Activated CD8-positive, alpha-beta T cell treated with anti-CD3 and anti-CD28 coated beads for 36 hours (primary cell): ENCODE measurements at regions of chr16 and their contacts with region 1.

Region 1: GRCh38 chr16:31202414-31203375 is at the start of gene PYCARD:
- DNase-seq: peak; percentile 45
- ATAC-seq: peak; percentile 24
- H3K4me3 Mint-ChIP-seq: peak within 1 kb of the TSS; percentile 75
- H3K27ac Mint-ChIP-seq: peak within 1 kb of the TSS; percentile 47
- H3K4me1 Mint-ChIP-seq: peaks cover 40% of the 10 kb centered on the region
- H3K27me3 Mint-ChIP-seq: no peaks in the 10 kb centered on the region
- CTCF ChIP-seq: no peak
- total RNA-seq, gene PYCARD: 5.9 to 6.1 TPM

Region 2: DNA sequence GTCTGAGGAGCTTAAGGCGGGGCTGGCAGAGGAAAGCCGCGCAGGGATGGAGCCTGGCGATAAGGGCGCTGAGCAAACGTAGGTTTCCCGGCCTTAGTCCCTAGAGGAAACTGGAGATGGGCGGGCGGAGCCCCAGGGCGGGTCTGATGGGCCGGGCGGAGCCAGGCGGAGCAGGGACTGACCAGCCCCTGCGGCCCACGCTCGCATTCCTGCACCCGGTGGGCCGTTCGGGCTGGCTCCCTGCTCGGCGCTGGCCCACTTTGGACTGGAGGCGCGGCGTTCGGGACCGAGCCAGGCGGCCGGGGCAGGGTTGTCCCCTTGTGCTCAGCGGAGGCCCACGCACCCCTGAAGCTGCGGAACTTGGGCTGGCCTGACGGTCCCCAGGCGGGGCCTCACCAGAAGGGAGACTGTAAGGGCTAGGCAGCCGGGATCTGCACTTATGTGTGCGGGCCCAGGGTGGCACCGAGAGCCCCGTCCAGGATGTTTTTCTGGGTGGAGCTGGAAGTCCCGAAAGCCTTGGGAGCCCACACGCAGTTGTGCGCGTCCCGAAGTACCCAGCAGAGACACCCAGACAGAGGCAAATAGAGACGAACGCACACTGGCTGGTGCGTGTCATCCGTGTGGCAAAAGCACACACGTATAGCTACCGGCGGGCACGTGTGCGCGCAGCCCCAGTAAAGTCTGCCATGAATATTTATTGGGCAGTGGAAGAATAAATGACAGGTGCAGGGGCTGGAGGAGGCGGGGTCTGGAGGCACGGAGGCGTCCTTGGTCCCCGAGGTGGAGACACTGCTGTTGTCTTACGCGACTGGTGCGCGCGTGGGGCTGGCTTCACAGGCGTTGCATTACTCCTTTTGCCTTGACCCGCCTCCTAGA is 12.8 kb after region 1 on chr16:
- CTCF ChIA-PET with region 1: interaction called, 9 read pairs
- POLR2A ChIA-PET with region 1: interaction called, 48 read pairs
- intact Hi-C with region 1: no loop called
- DNase-seq: peak; percentile 52
- ATAC-seq: peak; percentile 66
- H3K4me3 Mint-ChIP-seq: peak overlapping the region; percentile 42
- H3K27ac Mint-ChIP-seq: no peak overlapping the region
- H3K4me1 Mint-ChIP-seq: peaks cover 22% of the 10 kb centered on the region
- H3K27me3 Mint-ChIP-seq: peaks cover 41% of the 10 kb centered on the region
- CTCF ChIP-seq: no peak

Region 3: GRCh38 chr16:31229501-31229900 is 26.8 kb after region 1 on chr16:
- CTCF ChIA-PET with region 1: no interaction called
- POLR2A ChIA-PET with region 1: no interaction called
- intact Hi-C with region 1: no loop called
- DNase-seq: no peak
- ATAC-seq: no peak
- H3K4me3 Mint-ChIP-seq: no peak overlapping the region
- H3K27ac Mint-ChIP-seq: no peak overlapping the region
- H3K4me1 Mint-ChIP-seq: no peaks in the 10 kb centered on the region
- H3K27me3 Mint-ChIP-seq: no peaks in the 10 kb centered on the region
- CTCF ChIP-seq: no peak

Region 4: GRCh38 chr16:31440516-31441184 is 238.0 kb after region 1 on chr16:
- CTCF ChIA-PET with region 1: interaction called, 6 read pairs
- POLR2A ChIA-PET with region 1: interaction called, 8 read pairs
- intact Hi-C with region 1: loop called (anchors 10 kb)
- DNase-seq: no peak
- ATAC-seq: no peak
- H3K4me3 Mint-ChIP-seq: no peak overlapping the region
- H3K27ac Mint-ChIP-seq: no peak overlapping the region
- H3K4me1 Mint-ChIP-seq: peaks cover 19% of the 10 kb centered on the region
- H3K27me3 Mint-ChIP-seq: peaks cover 6% of the 10 kb centered on the region
- CTCF ChIP-seq: no peak

Region 5: DNA sequence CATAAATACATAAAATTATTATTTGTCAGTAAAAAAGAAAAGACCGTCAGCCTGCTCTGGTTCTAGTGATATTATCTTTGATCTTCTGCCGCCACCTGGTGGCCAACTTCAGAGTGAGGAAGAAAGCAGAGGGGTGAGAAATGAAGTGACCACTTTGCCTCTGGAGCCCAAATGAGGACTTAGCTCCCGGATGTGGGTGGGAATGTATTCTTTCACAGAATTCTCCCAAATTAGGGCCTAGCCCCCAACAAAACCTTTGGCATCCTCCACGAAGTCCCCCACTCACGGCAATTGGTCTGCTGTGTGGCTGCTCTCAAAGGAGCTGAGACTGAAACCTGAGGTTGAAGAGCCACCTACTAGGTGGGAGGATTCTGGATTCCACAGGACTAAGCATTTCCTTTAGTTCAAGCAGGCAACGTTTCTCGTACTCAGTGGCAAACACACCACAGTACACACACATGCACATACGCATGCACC is 666.0 kb after region 1 on chr16:
- CTCF ChIA-PET with region 1: interaction called, 10 read pairs
- POLR2A ChIA-PET with region 1: no interaction called
- intact Hi-C with region 1: no loop called
- DNase-seq: peak; percentile 91
- ATAC-seq: peak; percentile 48
- H3K4me3 Mint-ChIP-seq: peak overlapping the region; percentile 66
- H3K27ac Mint-ChIP-seq: peak overlapping the region; percentile 97
- H3K4me1 Mint-ChIP-seq: peaks cover 51% of the 10 kb centered on the region
- H3K27me3 Mint-ChIP-seq: no peaks in the 10 kb centered on the region
- CTCF ChIP-seq: peak; percentile 94